ENCODE measurements at regions of chr16 and their contacts with region 1.

Region 1: DNA sequence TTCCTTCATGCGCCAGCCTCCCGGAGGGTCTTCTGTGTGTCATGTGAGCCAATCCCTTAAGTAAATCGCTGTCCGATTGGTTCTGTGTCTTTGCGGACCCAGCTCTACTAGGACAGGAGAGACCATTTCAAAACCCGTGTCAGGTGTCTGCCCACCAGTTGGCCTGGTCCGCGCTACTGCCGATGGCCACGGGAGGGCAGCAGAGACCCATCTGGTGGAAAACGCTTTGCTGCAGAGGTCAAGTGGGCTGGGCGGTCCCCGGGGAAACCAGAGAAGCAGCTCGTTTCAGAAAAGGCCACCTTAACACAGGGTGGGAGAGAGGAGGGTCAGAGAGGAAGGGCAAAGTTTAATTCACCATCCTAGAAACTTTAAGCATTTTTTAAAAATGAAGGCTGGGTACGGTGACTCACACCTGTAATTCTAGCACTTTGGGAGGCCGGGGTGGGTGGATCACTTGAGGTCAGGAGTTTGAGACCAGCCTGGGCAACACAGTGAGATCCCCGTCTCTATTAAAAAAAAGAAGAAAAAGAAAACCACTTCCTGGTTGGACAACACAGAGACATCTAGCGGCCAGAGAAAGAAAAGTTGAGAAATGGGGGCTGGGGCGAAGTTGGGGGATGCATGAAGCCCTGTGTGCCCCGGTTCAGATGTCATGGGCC is 2.8 kb upstream of the CIBAR2 start:
- DNase-seq: peak; percentile 78
- ATAC-seq: peak; percentile 88
- H3K4me3 ChIP-seq: 0 out of 6 replicates have a peak overlapping the region, but pooled peaks of 1 of the 3 experiments have one; percentile 0
- H3K27ac ChIP-seq: no peak overlapping the region
- H3K4me1 ChIP-seq: peaks cover 14% of the 10 kb centered on the region
- H3K27me3 ChIP-seq: peaks cover 15 to 44% of the 10 kb centered on the region in 2 experiments
- CTCF ChIP-seq: peak; percentile 99
- EP300 ChIP-seq: no peak
- POLR2A ChIP-seq: no peak
- RAD21 ChIP-seq: peak; percentile 99

Region 2: DNA sequence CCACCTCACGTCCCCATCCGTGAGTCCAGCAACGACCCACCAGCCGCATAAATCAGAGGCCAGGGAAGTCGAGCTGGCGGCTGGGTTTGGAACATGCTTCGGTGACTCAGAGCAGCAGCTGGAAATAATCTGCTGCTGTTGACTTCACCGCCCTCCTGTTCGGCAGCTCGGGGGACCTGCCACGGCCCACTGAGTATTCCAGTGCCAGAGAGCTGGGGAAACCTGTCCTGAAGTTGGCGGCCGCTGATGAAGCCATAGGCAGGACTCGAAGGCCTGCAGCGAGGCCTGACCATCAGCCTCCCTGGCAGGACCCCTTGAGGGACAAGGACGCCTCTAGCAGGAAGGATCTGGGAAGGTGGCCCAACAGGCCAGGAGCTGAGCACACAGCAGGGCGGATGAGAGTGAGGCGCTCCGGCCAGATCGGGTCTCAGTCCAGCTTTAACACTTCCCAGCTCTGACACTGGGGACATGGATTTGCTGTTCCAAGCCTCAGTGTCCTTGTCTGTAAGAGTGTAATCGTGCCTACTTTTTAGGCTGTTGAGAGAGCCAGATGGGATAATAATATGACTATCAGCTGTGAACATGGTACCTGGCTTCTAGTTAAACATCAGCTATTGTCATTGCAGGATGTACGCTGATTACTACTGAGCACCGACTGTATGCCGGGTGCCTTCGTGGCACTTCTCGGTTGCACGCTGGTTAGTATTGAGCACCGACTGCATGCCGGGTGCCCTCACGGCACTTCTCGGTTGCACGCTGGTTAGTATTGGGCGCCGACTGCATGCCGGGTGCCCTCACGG is 47.6 kb after region 1 on chr16:
- CTCF ChIA-PET with region 1: interaction called, 7 read pairs
- POLR2A ChIA-PET with region 1: interaction called, 16 read pairs
- in situ Hi-C with region 1: no loop called
- intact Hi-C with region 1: no loop called
- DNase-seq: no peak
- ATAC-seq: peak; percentile 7; the same call in 2 of the 3 replicates
- H3K4me3 ChIP-seq: peak overlapping the region; percentile 21 to 62 (median 35); a peak in 5 of 6 replicates
- H3K27ac ChIP-seq: peak overlapping the region; percentile 41
- H3K4me1 ChIP-seq: peaks cover 86% of the 10 kb centered on the region
- H3K27me3 ChIP-seq: peaks cover 0 to 12% of the 10 kb centered on the region in 2 experiments; a peak in 1 of 5 replicates
- CTCF ChIP-seq: peak; percentile 38
- EP300 ChIP-seq: no peak
- POLR2A ChIP-seq: no peak
- RAD21 ChIP-seq: no peak

Region 3: GRCh38 chr16:85172455-85173145 is 57.6 kb after region 1 on chr16:
- CTCF ChIA-PET with region 1: interaction called, 7 read pairs
- POLR2A ChIA-PET with region 1: interaction called, 3 read pairs
- in situ Hi-C with region 1: no loop called
- intact Hi-C with region 1: loop called (anchors 5 kb)
- DNase-seq: peak; percentile 75
- ATAC-seq: peak; percentile 75
- H3K4me3 ChIP-seq: peak overlapping the region; percentile 38 to 72 (median 53)
- H3K27ac ChIP-seq: no peak overlapping the region
- H3K4me1 ChIP-seq: peaks cover 70% of the 10 kb centered on the region
- H3K27me3 ChIP-seq: peaks cover 13 to 37% of the 10 kb centered on the region in 2 experiments; a peak in 4 of 5 replicates
- CTCF ChIP-seq: peak; percentile 86
- EP300 ChIP-seq: no peak
- POLR2A ChIP-seq: no peak
- RAD21 ChIP-seq: peak; percentile 78

Region 4: GRCh38 chr16:85245307-85246172 is 130.5 kb after region 1 on chr16:
- CTCF ChIA-PET with region 1: no interaction called
- POLR2A ChIA-PET with region 1: no interaction called
- in situ Hi-C with region 1: no loop called
- intact Hi-C with region 1: loop called (anchors 2 kb)
- DNase-seq: peak; percentile 51
- ATAC-seq: peak; percentile 69
- H3K4me3 ChIP-seq: no peak overlapping the region
- H3K27ac ChIP-seq: no peak overlapping the region
- H3K4me1 ChIP-seq: peaks cover 12% of the 10 kb centered on the region
- H3K27me3 ChIP-seq: no peaks in the 10 kb centered on the region; a peak in 1 of 5 replicates
- CTCF ChIP-seq: peak; percentile 89
- EP300 ChIP-seq: no peak
- POLR2A ChIP-seq: no peak
- RAD21 ChIP-seq: peak; percentile 71

Region 5: GRCh38 chr16:85275533-85276249 is 160.7 kb after region 1 on chr16:
- CTCF ChIA-PET with region 1: interaction called, 9 read pairs
- POLR2A ChIA-PET with region 1: no interaction called
- in situ Hi-C with region 1: no loop called
- intact Hi-C with region 1: loop called (anchors 1 kb)
- DNase-seq: peak; percentile 60
- ATAC-seq: peak; percentile 88
- H3K4me3 ChIP-seq: no peak overlapping the region
- H3K27ac ChIP-seq: no peak overlapping the region
- H3K4me1 ChIP-seq: peaks cover 6% of the 10 kb centered on the region; the same call in 1 of the 2 replicates
- H3K27me3 ChIP-seq: peaks cover 3 to 4% of the 10 kb centered on the region in 2 experiments; a peak in 2 of 5 replicates
- CTCF ChIP-seq: peak; percentile 100
- EP300 ChIP-seq: no peak
- POLR2A ChIP-seq: no peak
- RAD21 ChIP-seq: peak; percentile 99